ENCODE measurements at regions of chr4 and their contacts with region 1.

Region 1: GRCh38 chr4:181364504-181364903 is 878.7 kb upstream of the TENM3 start:
- DNase-seq: no peak
- H3K4me3 ChIP-seq: no peak overlapping the region
- H3K27ac ChIP-seq: no peak overlapping the region
- H3K4me1 ChIP-seq: no peaks in the 10 kb centered on the region
- H3K27me3 ChIP-seq: no peaks in the 10 kb centered on the region
- CTCF ChIP-seq: no peak
- POLR2A ChIP-seq: no peak

Region 2: DNA sequence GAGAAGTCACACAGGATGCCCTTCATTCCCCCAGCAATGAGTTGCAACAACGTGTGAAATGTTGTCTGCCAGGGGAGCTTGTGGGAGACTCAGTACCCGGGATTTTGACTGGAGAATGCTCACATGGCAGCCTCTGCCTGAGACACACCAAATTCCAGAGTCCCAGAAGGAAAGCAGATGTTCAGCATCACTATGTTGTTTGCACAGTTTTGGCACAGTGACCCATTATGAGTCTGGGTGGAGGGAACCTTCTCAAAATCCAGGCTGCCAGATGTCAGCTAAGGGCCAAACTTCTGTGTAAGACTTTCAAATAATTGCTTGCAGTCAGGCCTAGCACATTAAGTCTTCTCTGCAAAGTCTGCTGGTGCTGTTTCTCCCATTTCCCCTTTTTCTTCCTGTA is 151.0 kb before region 1 on chr4:
- intact Hi-C with region 1: loop called (anchors 10 kb)
- DNase-seq: no peak
- H3K4me3 ChIP-seq: no peak overlapping the region
- H3K27ac ChIP-seq: no peak overlapping the region
- H3K4me1 ChIP-seq: no peaks in the 10 kb centered on the region
- H3K27me3 ChIP-seq: no peaks in the 10 kb centered on the region
- CTCF ChIP-seq: no peak
- POLR2A ChIP-seq: no peak

Region 3: GRCh38 chr4:181376058-181376457 is 11.6 kb after region 1 on chr4:
- intact Hi-C with region 1: no loop called
- DNase-seq: no peak
- H3K4me3 ChIP-seq: no peak overlapping the region
- H3K27ac ChIP-seq: no peak overlapping the region
- H3K4me1 ChIP-seq: no peaks in the 10 kb centered on the region
- H3K27me3 ChIP-seq: no peaks in the 10 kb centered on the region
- CTCF ChIP-seq: no peak
- POLR2A ChIP-seq: no peak

Region 4: DNA sequence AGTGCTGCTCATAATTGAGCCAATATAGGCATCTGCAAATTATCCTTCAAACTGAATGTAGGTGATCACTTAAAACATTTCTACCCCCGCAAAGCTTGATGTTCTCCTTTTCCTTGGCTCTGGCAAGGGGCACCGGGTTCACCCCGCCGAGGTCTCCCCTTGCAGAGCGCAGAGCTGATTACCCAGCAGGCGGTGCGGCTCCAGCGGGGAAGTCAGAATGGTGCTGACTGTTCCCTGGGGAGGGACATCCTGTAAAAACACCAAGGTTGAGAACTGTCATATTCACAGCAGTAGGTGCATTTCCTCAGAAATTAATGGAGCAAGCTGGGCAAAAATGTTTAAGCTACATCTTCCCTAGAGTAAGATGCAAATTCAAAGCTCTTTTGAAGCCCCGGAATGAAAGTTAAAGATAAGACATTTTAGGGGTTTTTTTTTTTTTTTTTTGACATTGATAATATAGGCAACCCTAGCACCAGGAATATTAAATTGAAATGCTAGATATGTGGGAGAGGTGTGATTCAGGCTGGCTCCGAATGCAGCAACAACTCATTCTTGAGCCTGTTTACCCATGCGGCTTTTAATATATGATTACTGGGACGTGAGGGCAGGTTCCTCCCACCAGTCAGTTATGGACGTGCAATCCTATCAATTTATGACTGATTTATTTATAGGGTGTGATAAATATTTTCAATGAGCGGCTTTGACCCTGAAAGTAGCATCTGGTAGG is 111.4 kb after region 1 on chr4:
- intact Hi-C with region 1: no loop called
- DNase-seq: no peak
- H3K4me3 ChIP-seq: no peak overlapping the region
- H3K27ac ChIP-seq: no peak overlapping the region
- H3K4me1 ChIP-seq: no peaks in the 10 kb centered on the region
- H3K27me3 ChIP-seq: no peaks in the 10 kb centered on the region
- CTCF ChIP-seq: no peak
- POLR2A ChIP-seq: no peak

Measured in breast epithelium (tissue), 4 donors.